ENCODE measurements at regions of chr5 and their contacts with region 1.

Region 1: DNA sequence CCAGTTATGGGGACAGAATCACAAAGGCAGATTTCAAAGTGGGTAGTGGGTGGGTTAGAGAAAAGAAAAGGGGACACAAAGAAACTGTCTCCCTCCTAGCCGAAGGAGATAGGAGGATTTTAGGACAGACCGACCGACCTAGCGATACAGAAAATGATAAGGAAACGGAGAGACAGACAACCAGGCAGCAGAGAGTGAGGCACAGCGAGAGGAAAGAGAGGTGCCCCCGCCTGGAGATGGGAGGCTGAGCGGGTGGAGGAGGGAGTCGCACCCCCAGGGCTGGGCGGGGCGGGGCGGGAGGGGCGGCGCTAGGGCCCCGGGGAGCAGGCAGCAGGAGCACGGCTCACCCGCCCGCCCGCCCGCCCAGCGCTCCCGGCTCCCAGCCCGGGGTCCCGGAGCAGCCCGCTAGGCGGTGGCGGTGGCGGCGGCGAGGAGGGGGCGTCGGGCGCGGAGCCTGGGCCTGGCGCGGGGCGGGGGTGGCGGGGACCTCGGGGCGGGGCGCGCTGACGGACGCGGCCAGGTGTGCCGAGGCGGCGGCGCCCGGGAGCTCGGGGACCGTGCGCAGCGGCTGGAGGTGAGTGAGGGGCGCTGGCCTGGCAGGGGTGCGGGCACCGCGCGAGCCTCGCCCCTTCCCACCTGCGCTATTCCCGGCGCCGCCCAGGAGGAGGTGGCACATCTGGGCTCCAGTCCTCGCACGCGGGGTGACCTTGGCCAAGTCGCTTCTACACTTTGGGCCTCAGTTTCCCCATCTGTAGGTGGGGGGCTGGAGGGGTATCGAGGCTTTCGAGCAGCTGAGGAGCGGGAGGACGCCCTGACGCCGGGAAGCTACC is 15.9 kb upstream of the SYNPO start:
- DNase-seq: no peak
- ATAC-seq: peak; percentile 43
- H3K4me3 ChIP-seq: peak overlapping the region; percentile 91
- H3K27ac ChIP-seq: peak overlapping the region; percentile 66
- H3K4me1 ChIP-seq: peaks cover 40% of the 10 kb centered on the region
- H3K27me3 ChIP-seq: no peaks in the 10 kb centered on the region
- CTCF ChIP-seq: peak in 1 of 3 experiments; percentile 19; a peak in 1 of 6 replicates
- EP300 ChIP-seq: no peak
- POLR2A ChIP-seq: no peak
- RAD21 ChIP-seq: no peak

Region 2: GRCh38 chr5:150589871-150590601 is 34.5 kb before region 1 on chr5:
- CTCF ChIA-PET with region 1: interaction called, 15 read pairs
- POLR2A ChIA-PET with region 1: interaction called, 25 read pairs
- RAD21 ChIA-PET with region 1: interaction called, 15 read pairs
- SMC1A ChIA-PET with region 1: interaction called, 21 read pairs
- in situ Hi-C with region 1: no loop called
- intact Hi-C with region 1: no loop called
- DNase-seq: peak; percentile 56
- ATAC-seq: peak; percentile 94
- H3K4me3 ChIP-seq: no peak overlapping the region
- H3K27ac ChIP-seq: no peak overlapping the region
- H3K4me1 ChIP-seq: peaks cover 13% of the 10 kb centered on the region
- H3K27me3 ChIP-seq: no peaks in the 10 kb centered on the region; a peak in 1 of 4 replicates
- CTCF ChIP-seq: peak; percentile 37 to 43 (median 40); a peak in 4 of 6 replicates
- EP300 ChIP-seq: no peak; a peak in 1 of 4 replicates
- POLR2A ChIP-seq: no peak
- RAD21 ChIP-seq: peak; percentile 57

Region 3: GRCh38 chr5:150612405-150612804 is 12.1 kb before region 1 on chr5:
- CTCF ChIA-PET with region 1: interaction called, 4 read pairs
- POLR2A ChIA-PET with region 1: interaction called, 5 read pairs
- RAD21 ChIA-PET with region 1: interaction called, 15 read pairs
- SMC1A ChIA-PET with region 1: interaction called, 7 read pairs
- in situ Hi-C with region 1: no loop called
- intact Hi-C with region 1: no loop called
- DNase-seq: no peak
- ATAC-seq: no peak
- H3K4me3 ChIP-seq: no peak overlapping the region
- H3K27ac ChIP-seq: no peak overlapping the region
- H3K4me1 ChIP-seq: no peaks in the 10 kb centered on the region
- H3K27me3 ChIP-seq: no peaks in the 10 kb centered on the region; a peak in 1 of 4 replicates
- CTCF ChIP-seq: no peak
- EP300 ChIP-seq: no peak
- POLR2A ChIP-seq: no peak
- RAD21 ChIP-seq: no peak

Region 4: DNA sequence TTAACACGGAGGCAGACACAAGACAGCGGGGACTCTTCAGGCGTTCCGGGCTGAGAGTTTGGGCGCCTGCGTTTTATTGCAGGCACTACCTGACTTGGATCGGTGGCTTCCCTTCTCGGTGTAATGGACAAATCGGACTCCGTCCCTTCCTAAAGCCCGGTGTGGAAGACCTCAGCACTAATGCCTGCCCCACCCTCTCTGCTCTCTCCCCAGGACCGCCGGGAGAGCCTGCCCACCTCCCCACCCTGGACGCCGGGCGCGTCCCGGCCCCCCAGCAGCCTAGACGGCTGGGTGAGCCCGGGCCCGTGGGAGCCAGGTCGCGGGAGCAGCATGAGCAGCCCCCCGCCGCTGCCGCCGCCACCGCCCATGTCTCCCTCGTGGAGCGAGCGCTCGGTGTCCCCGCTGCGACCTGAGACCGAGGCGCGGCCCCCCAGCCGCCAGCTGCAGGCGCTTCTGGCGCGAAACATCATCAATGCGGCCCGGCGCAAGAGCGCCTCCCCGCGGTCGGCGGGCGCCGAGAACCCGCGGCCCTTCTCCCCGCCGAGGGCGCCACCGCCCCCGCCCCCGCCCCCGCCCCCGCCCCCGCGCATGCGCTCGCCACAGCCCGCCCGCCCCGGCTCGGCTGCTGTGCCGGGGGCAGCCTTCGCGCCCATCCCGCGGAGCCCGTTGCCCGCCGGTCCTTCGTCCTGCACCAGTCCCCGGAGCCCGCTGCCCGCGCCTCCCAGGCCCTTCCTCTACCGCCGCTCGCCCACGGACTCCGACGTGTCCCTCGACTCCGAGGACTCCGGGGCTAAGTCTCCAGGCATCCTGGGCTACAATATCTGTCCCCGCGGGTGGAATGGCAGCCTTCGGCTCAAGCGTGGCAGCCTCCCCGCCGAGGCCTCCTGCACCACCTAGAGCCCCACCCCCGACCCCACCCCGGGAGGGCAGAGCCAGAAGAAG is 31.9 kb after region 1 on chr5:
- CTCF ChIA-PET with region 1: interaction called, 17 read pairs
- POLR2A ChIA-PET with region 1: interaction called, 4 read pairs
- RAD21 ChIA-PET with region 1: interaction called, 17 read pairs
- SMC1A ChIA-PET with region 1: interaction called, 8 read pairs
- in situ Hi-C with region 1: no loop called
- intact Hi-C with region 1: no loop called
- DNase-seq: peak; percentile 11
- ATAC-seq: peak; percentile 84
- H3K4me3 ChIP-seq: peak overlapping the region; percentile 70; the same call in 1 of the 2 replicates
- H3K27ac ChIP-seq: no peak overlapping the region
- H3K4me1 ChIP-seq: peaks cover 7% of the 10 kb centered on the region
- H3K27me3 ChIP-seq: no peaks in the 10 kb centered on the region; a peak in 2 of 4 replicates
- CTCF ChIP-seq: peak; percentile 43 to 78 (median 75); a peak in 5 of 6 replicates
- EP300 ChIP-seq: no peak
- POLR2A ChIP-seq: peak; percentile 60
- RAD21 ChIP-seq: peak; percentile 76

Region 5: GRCh38 chr5:150692276-150692675 is 67.7 kb after region 1 on chr5:
- CTCF ChIA-PET with region 1: no interaction called
- POLR2A ChIA-PET with region 1: no interaction called
- RAD21 ChIA-PET with region 1: no interaction called
- SMC1A ChIA-PET with region 1: no interaction called
- in situ Hi-C with region 1: no loop called
- intact Hi-C with region 1: no loop called
- DNase-seq: no peak
- ATAC-seq: no peak
- H3K4me3 ChIP-seq: no peak overlapping the region
- H3K27ac ChIP-seq: no peak overlapping the region
- H3K4me1 ChIP-seq: no peaks in the 10 kb centered on the region
- H3K27me3 ChIP-seq: no peaks in the 10 kb centered on the region
- CTCF ChIP-seq: no peak
- EP300 ChIP-seq: no peak
- POLR2A ChIP-seq: no peak
- RAD21 ChIP-seq: no peak

Measured in GM12878 (cell line).